ENCODE measurements at regions of chr14 and their contacts with region 1.

Region 1: GRCh38 chr14:69812714-69813113 is 15.7 kb upstream of the SLC10A1 start:
- DNase-seq: peak; percentile 65 to 73
- H3K4me3 ChIP-seq: no peak overlapping the region
- H3K4me3 Mint-ChIP-seq: no peak overlapping the region
- H3K27ac Mint-ChIP-seq: no peak overlapping the region
- H3K4me1 ChIP-seq: peaks cover 70% of the 10 kb centered on the region
- H3K4me1 Mint-ChIP-seq: peaks cover 26% of the 10 kb centered on the region
- H3K27me3 ChIP-seq: no peaks in the 10 kb centered on the region
- H3K27me3 Mint-ChIP-seq: no peaks in the 10 kb centered on the region
- CTCF ChIP-seq: peak; percentile 24 to 38

Region 2: GRCh38 chr14:69796797-69797500 is 15.8 kb before region 1 on chr14 and contains the start of gene SLC10A1:
- CTCF ChIA-PET with region 1: no interaction called
- POLR2A ChIA-PET with region 1: no interaction called
- intact Hi-C with region 1: loop called (anchors 1 kb)
- DNase-seq: peak; percentile 46 to 56
- H3K4me3 ChIP-seq: no peak within 1 kb of the TSS
- H3K4me3 Mint-ChIP-seq: peak within 1 kb of the TSS; percentile 16
- H3K27ac Mint-ChIP-seq: peak within 1 kb of the TSS; percentile 79
- H3K4me1 ChIP-seq: peaks cover 24% of the 10 kb centered on the region
- H3K4me1 Mint-ChIP-seq: peaks cover 21% of the 10 kb centered on the region
- H3K27me3 ChIP-seq: no peaks in the 10 kb centered on the region
- H3K27me3 Mint-ChIP-seq: no peaks in the 10 kb centered on the region
- CTCF ChIP-seq: no peak
- total RNA-seq, gene SLC10A1: 2.6 and 3.8 TPM in 2 replicates

Region 3: GRCh38 chr14:69877492-69877891 is 64.8 kb after region 1 on chr14:
- CTCF ChIA-PET with region 1: no interaction called
- POLR2A ChIA-PET with region 1: no interaction called
- intact Hi-C with region 1: no loop called
- DNase-seq: no peak
- H3K4me3 ChIP-seq: no peak overlapping the region
- H3K4me3 Mint-ChIP-seq: no peak overlapping the region
- H3K27ac Mint-ChIP-seq: no peak overlapping the region
- H3K4me1 ChIP-seq: no peaks in the 10 kb centered on the region
- H3K4me1 Mint-ChIP-seq: no peaks in the 10 kb centered on the region
- H3K27me3 ChIP-seq: no peaks in the 10 kb centered on the region
- H3K27me3 Mint-ChIP-seq: no peaks in the 10 kb centered on the region
- CTCF ChIP-seq: peak; percentile 23 to 33